Thyroid gland (tissue), 4 donors: ENCODE measurements at regions of chr9 and their contacts with region 1.

Region 1: DNA sequence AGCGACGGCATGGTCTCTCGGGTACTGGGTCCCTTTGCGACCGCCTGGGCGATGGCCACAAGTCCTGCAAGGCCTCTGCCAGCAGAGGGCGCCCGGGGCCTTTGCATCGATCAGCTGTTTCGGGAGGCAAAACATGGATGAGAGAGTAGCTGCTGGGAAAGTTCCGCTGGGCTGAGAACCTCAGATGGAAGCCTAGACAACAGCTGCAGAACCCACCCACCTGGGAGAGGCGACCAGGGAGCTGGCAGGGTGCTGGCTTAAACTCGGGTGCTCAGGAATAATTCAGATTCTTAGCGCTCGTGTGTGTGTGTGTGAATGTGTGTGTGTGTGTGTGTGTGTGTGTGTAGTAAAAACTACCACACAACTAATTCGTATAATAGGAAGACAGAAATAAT is 50.0 kb downstream of the TRIM32 start:
- DNase-seq: peak; percentile 79 to 83
- H3K4me3 ChIP-seq: no peak overlapping the region
- H3K27ac ChIP-seq: no peak overlapping the region
- H3K4me1 ChIP-seq: peaks cover 9 to 11% of the 10 kb centered on the region in 2 donors
- H3K27me3 ChIP-seq: no peaks in the 10 kb centered on the region
- CTCF ChIP-seq: peak; percentile 59 to 88 (median 76)
- POLR2A ChIP-seq: no peak

Region 2: GRCh38 chr9:116855883-116856662 is 118.9 kb after region 1 on chr9:
- intact Hi-C with region 1: loop called (anchors 5 kb)
- DNase-seq: peak; percentile 44 to 59
- H3K4me3 ChIP-seq: no peak overlapping the region
- H3K27ac ChIP-seq: no peak overlapping the region
- H3K4me1 ChIP-seq: peaks cover 0 to 3% of the 10 kb centered on the region in 2 donors
- H3K27me3 ChIP-seq: no peaks in the 10 kb centered on the region
- CTCF ChIP-seq: no peak
- POLR2A ChIP-seq: no peak